ENCODE measurements at regions of chr1 and their contacts with region 1.

Region 1: DNA sequence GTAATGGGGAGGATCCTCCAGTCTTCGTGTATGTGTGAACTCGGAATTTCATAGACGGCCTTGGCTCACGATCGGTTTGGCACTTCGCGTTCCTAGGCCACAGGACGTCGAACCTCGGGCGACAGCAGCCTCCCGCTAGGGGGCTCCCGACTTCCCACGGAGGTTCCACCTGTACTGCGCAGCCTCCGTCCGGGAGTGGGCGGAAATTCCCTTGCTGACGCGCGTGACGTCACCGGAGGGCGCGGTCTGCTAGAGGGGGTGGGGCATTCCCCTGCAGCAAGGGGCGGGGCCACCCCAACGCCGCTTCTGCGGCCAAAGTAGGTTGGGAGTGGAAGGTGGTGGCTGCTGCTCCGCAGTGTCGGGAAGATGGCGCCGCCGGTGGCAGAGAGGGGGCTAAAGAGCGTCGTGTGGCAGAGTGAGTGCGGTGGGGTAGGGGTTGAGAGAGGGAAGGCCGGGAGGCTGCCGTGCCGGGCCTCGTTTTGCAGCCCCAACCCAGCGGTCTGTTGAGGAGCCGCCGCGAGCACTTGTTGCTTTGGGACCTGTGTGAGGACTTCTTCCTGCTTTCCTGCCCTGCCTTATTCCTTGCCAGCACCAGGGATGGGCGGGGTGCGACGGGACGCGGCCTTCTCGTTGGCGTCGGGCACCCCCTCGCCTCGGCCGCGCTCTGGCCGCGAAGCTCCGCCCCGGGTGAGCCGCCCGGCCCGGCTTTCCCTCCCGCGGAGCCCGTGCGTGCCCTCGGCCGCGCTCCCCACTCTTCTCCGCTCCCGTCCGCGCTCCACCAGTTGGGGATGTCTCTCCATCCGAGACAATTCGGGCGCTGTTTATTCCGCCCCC is at the start of gene STXBP3:
- DNase-seq: peak; percentile 99 to 100 (median 100)
- ATAC-seq: peak; percentile 92
- H3K4me3 ChIP-seq: peak within 1 kb of the TSS; percentile 72 to 98
- H3K4me3 Mint-ChIP-seq: peak within 1 kb of the TSS; percentile 98
- H3K27ac ChIP-seq: peak within 1 kb of the TSS; percentile 82 to 97
- H3K27ac Mint-ChIP-seq: peak within 1 kb of the TSS; percentile 99
- H3K4me1 ChIP-seq: peaks cover 26% of the 10 kb centered on the region
- H3K4me1 Mint-ChIP-seq: peaks cover 34% of the 10 kb centered on the region
- H3K27me3 ChIP-seq: no peaks in the 10 kb centered on the region
- H3K27me3 Mint-ChIP-seq: no peaks in the 10 kb centered on the region
- CTCF ChIP-seq: peak; percentile 84
- total RNA-seq, gene STXBP3: 49.0 to 50.4 TPM

Region 2: GRCh38 chr1:108643492-108644335 is 102.9 kb before region 1 on chr1:
- CTCF ChIA-PET with region 1: interaction called, 4 read pairs
- POLR2A ChIA-PET with region 1: interaction called, 4 read pairs
- intact Hi-C with region 1: loop called (anchors 2 to 5 kb)
- DNase-seq: peak in 6 of 9 experiments; percentile 27 to 87 (median 58)
- ATAC-seq: peak; percentile 15
- H3K4me3 ChIP-seq: no peak overlapping the region
- H3K4me3 Mint-ChIP-seq: peak overlapping the region; percentile 10
- H3K27ac ChIP-seq: peak overlapping the region; percentile 77 to 92
- H3K27ac Mint-ChIP-seq: peak overlapping the region; percentile 100
- H3K4me1 ChIP-seq: peaks cover 69% of the 10 kb centered on the region
- H3K4me1 Mint-ChIP-seq: peaks cover 77% of the 10 kb centered on the region
- H3K27me3 ChIP-seq: no peaks in the 10 kb centered on the region
- H3K27me3 Mint-ChIP-seq: no peaks in the 10 kb centered on the region
- CTCF ChIP-seq: peak; percentile 69

Region 3: GRCh38 chr1:108877348-108878159 is 131.0 kb after region 1 on chr1:
- CTCF ChIA-PET with region 1: no interaction called
- POLR2A ChIA-PET with region 1: no interaction called
- intact Hi-C with region 1: loop called (anchors 1 kb)
- DNase-seq: peak in 2 of 9 experiments; percentile 14 to 19
- ATAC-seq: no peak
- H3K4me3 ChIP-seq: peak overlapping the region; percentile 69 to 80
- H3K4me3 Mint-ChIP-seq: peak overlapping the region; percentile 95
- H3K27ac ChIP-seq: peak overlapping the region; percentile 18 to 24
- H3K27ac Mint-ChIP-seq: peak overlapping the region; percentile 46
- H3K4me1 ChIP-seq: peaks cover 6% of the 10 kb centered on the region
- H3K4me1 Mint-ChIP-seq: peaks cover 12% of the 10 kb centered on the region
- H3K27me3 ChIP-seq: peaks cover 0 to under 1% of the 10 kb centered on the region in 2 experiments
- H3K27me3 Mint-ChIP-seq: peaks cover 4% of the 10 kb centered on the region
- CTCF ChIP-seq: no peak

Region 4: GRCh38 chr1:109041621-109042468 is 295.3 kb after region 1 on chr1 and contains the start of gene WDR47:
- CTCF ChIA-PET with region 1: no interaction called
- POLR2A ChIA-PET with region 1: interaction called, 3 read pairs
- intact Hi-C with region 1: loop called (anchors 1 to 5 kb)
- DNase-seq: peak; percentile 92 to 99 (median 96)
- ATAC-seq: peak; percentile 96
- H3K4me3 ChIP-seq: peak within 1 kb of the TSS; percentile 97 to 99
- H3K4me3 Mint-ChIP-seq: peak within 1 kb of the TSS; percentile 93
- H3K27ac ChIP-seq: peak within 1 kb of the TSS; percentile 81 to 94
- H3K27ac Mint-ChIP-seq: peak within 1 kb of the TSS; percentile 92
- H3K4me1 ChIP-seq: peaks cover 10% of the 10 kb centered on the region
- H3K4me1 Mint-ChIP-seq: peaks cover 16% of the 10 kb centered on the region
- H3K27me3 ChIP-seq: no peaks in the 10 kb centered on the region
- H3K27me3 Mint-ChIP-seq: no peaks in the 10 kb centered on the region
- CTCF ChIP-seq: no peak
- total RNA-seq, gene WDR47: 31.5 to 32.6 TPM

Region 5: DNA sequence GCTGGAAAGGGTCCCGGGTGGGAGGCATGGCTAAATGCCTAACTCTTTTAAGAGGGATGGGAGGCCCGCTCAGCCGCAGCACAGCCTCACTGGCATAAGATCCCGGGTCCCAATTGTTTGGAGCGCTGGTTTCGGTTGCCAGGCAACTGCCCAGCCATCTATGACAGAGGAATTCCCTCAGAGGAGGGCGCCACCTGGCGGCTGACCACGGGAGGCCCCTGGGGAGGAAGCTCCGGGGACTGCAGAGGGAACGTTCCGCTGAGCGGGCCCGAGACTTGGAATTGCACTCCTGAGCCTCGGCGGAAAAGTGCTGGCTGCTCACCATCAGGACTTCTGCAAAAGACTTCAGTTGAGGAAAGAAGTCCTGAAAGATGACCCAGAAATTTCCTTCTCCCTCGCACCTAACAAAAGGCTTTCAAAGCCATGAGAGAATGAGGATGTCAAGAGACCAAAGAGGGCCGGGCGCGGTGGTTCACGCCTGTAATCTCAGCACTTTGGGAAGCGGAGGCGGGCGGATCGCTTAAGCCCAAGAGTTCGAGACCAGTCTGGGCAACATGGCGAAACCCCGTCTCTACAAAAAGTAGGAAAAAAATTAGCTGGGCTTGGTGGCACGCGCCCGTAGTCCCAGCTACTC is 366.2 kb after region 1 on chr1:
- CTCF ChIA-PET with region 1: no interaction called
- POLR2A ChIA-PET with region 1: no interaction called
- intact Hi-C with region 1: loop called in 1 of 2 experiments (anchors 5 kb)
- DNase-seq: peak; percentile 81 to 94 (median 89)
- ATAC-seq: peak; percentile 56
- H3K4me3 ChIP-seq: peak overlapping the region; percentile 46 to 66
- H3K4me3 Mint-ChIP-seq: peak overlapping the region; percentile 83
- H3K27ac ChIP-seq: peak overlapping the region; percentile 34 to 48
- H3K27ac Mint-ChIP-seq: peak overlapping the region; percentile 81
- H3K4me1 ChIP-seq: peaks cover 22% of the 10 kb centered on the region
- H3K4me1 Mint-ChIP-seq: peaks cover 29% of the 10 kb centered on the region
- H3K27me3 ChIP-seq: peaks cover 0 to 4% of the 10 kb centered on the region in 2 experiments
- H3K27me3 Mint-ChIP-seq: peaks cover 2% of the 10 kb centered on the region
- CTCF ChIP-seq: peak; percentile 90

Measured in CD8-positive, alpha-beta T cell (primary cell).